ENCODE measurements at regions of chr20 and their contacts with region 1.

Region 1: DNA sequence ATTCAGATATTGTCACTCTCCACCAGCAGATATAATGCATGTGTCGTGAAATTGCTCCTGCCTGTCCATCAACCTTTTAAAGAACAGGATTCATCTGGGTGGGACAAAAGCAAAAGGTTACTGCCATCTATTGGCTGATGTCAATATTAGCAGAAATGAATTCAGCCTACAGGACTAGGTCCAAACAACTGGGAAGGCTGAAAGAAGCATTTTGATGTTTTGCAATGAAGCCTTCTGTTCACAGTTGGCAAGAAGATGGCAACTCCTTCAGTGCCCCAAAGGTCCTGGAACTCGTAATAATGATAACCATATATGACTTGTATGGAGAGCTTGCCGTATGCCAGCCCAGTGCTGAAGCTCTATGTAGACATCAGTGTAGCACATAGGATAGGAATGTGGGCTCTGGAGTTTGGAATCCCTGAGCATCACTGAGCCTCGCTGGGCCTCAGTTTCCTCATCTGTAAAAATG is 7.5 kb downstream of the BCAS1 start:
- DNase-seq: no peak
- H3K4me3 Mint-ChIP-seq: no peak overlapping the region
- H3K27ac Mint-ChIP-seq: no peak overlapping the region
- H3K4me1 Mint-ChIP-seq: peaks cover 13% of the 10 kb centered on the region
- H3K27me3 Mint-ChIP-seq: peaks cover 8% of the 10 kb centered on the region

Region 2: GRCh38 chr20:53939572-53940359 is 123.1 kb before region 1 on chr20:
- CTCF ChIA-PET with region 1: interaction called, 23 read pairs
- DNase-seq: peak; percentile 86
- H3K4me3 Mint-ChIP-seq: peak overlapping the region; percentile 6
- H3K27ac Mint-ChIP-seq: peak overlapping the region; percentile 9
- H3K4me1 Mint-ChIP-seq: peaks cover 66% of the 10 kb centered on the region
- H3K27me3 Mint-ChIP-seq: no peaks in the 10 kb centered on the region

Region 3: DNA sequence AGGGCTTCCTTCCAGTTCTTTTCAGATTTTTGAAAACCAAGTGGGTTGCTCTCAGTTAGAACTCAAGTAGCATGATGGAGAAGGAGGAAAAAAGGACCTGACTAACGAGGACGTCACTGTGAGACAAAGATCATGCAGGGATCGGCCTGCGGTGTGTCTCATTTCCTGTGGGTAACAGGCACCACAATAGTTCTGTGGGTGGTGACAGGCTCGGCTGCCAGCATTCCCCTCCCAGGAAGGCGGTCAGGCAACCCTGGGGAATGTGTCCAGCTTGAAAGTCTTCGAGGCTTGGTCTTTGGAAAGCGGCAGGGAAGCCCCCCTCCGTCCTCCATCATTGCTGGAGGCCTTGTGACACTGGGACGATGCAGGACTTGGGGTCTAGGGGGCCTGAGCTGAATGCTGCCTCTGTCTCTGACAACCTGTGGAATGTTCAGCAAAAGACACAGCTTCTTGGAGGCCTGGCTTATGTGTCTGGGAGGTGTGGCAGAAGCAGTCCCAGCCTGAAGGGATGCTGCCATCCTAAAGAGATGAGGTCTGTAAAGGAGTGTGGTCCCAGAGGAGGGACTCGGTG is 113.4 kb before region 1 on chr20:
- CTCF ChIA-PET with region 1: interaction called, 18 read pairs
- DNase-seq: peak; percentile 89
- H3K4me3 Mint-ChIP-seq: peak overlapping the region; percentile 65
- H3K27ac Mint-ChIP-seq: peak overlapping the region; percentile 98
- H3K4me1 Mint-ChIP-seq: peaks cover 43% of the 10 kb centered on the region
- H3K27me3 Mint-ChIP-seq: peaks cover 6% of the 10 kb centered on the region

Region 4: DNA sequence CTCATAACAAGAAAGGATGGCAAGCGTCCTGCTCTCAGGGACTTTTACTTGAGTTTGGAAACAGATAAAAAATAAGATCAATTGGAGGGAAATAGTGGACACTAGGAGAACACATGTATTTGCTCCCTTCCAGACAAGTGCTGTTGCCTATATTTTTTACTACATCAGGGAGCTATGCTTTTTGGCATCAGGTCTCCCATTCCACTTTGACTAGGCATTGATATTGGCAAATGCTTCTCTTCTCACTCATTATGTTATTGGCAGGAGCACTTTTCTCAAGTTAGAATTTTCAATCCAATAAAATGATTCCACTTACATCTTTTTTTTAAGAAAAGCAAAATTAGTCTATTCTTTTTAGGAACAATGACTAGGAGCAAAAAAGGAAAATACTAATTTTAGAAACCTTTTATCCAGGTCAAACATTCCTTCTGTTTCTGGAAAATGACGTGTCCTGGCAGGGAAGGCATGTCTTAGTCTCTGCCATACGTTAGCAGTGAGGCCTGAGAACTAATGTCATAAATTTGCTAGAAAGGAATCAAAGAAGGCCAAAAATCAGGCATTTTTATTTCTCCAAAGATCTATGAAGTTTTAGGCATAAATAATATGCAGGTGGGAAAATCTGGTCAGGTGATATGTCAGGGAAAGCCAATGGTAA is 13.8 kb before region 1 on chr20:
- CTCF ChIA-PET with region 1: interaction called, 15 read pairs
- DNase-seq: no peak
- H3K4me3 Mint-ChIP-seq: no peak overlapping the region
- H3K27ac Mint-ChIP-seq: no peak overlapping the region
- H3K4me1 Mint-ChIP-seq: peaks cover 21% of the 10 kb centered on the region
- H3K27me3 Mint-ChIP-seq: no peaks in the 10 kb centered on the region